ENCODE measurements at regions of chr11 and their contacts with region 1.

Region 1: DNA sequence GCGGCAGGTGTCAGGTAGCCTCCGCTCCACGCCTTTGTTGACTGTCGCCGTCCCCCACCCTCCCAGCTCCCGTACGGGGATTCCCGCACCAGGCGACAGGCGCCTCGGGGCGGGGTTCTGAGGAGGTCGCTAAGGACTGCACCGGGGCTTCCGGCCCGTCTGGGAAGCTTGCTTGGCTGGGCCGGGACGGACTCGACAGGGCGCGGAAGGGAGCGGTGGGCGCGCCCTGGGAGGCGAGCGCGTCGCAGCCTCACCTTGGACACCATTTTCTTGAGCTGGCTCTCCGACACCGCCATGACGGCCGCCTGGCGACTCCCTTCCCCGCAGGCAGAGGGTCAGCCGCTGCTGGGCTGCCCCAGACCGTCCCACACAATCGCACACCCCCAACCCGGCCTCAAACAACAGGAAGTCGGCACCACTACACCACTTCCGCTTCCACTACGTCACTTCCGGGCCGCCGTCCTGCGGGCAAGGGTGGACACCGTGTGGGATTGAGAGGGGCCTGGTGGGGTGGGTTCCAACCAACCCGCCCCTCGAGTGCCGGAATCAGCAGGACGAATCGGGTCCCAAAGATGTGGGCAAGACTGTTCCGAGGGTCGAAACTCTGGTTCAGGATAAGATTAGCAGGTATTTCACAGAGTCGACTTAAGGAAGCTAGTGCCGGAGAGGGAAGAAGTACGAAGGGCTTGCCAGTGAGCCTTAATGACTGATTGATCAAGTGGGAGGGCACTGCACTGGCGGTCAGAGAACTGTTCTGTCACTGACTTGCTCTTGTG is at the start of gene TSG101:
- DNase-seq: peak; percentile 88 to 92
- H3K4me3 ChIP-seq: peak within 1 kb of the TSS; percentile 91
- H3K27ac ChIP-seq: peak within 1 kb of the TSS; percentile 73
- H3K4me1 ChIP-seq: peaks cover 29% of the 10 kb centered on the region
- H3K27me3 ChIP-seq: no peaks in the 10 kb centered on the region
- CTCF ChIP-seq: no peak
- total RNA-seq, gene TSG101: 81.1 and 97.1 TPM in 2 replicates

Region 2: GRCh38 chr11:18115360-18116127 is 411.2 kb before region 1 on chr11:
- CTCF ChIA-PET with region 1: no interaction called
- POLR2A ChIA-PET with region 1: no interaction called
- intact Hi-C with region 1: loop called (anchors 10 kb)
- DNase-seq: peak; percentile 63 to 64
- H3K4me3 ChIP-seq: no peak overlapping the region
- H3K27ac ChIP-seq: no peak overlapping the region
- H3K4me1 ChIP-seq: no peaks in the 10 kb centered on the region
- H3K27me3 ChIP-seq: peaks cover 30% of the 10 kb centered on the region
- CTCF ChIP-seq: peak; percentile 97

Region 3: DNA sequence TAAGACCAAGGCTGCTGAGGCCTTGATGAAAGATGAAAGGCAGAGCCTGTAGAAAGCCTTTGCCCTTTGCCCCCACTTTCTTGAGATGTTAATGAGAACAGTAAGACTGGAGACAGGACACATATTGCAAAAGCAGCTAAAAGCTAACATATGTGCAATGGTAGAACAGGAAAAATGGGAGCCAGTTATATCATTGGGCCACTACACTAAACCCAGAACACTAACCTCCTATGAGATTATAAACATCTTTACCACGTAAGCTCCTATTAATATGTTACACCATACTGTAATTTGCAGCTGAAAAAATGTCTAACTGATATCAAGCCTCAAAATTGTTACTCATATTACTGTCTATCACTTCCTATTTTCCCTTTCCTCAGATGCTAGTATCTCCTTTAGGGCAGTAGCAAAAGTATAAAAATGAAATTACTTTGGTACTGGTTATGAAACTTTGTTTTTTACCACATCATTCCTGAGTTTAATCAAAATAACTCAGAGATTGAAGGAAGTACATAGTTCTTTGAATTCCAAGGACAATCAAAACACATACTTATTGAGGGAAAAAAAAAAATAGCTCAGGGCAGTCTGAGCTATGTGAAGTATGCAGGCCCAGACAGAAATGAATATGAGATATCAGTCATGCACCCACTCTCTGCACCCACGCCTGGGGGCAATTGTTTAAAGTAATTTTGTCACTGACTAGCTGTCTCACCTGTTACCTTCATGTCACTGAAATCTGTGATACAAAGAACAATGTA is 213.9 kb before region 1 on chr11:
- CTCF ChIA-PET with region 1: interaction called, 3 read pairs
- POLR2A ChIA-PET with region 1: interaction called, 24 read pairs
- intact Hi-C with region 1: no loop called
- DNase-seq: peak; percentile 85 to 99
- H3K4me3 ChIP-seq: peak overlapping the region; percentile 9; the same call in 1 of the 2 replicates
- H3K27ac ChIP-seq: peak overlapping the region; percentile 90
- H3K4me1 ChIP-seq: peaks cover 65% of the 10 kb centered on the region
- H3K27me3 ChIP-seq: no peaks in the 10 kb centered on the region
- CTCF ChIP-seq: no peak

Region 4: GRCh38 chr11:18332302-18332701 is 194.4 kb before region 1 on chr11:
- CTCF ChIA-PET with region 1: no interaction called
- POLR2A ChIA-PET with region 1: no interaction called
- intact Hi-C with region 1: no loop called
- DNase-seq: no peak
- H3K4me3 ChIP-seq: no peak overlapping the region
- H3K27ac ChIP-seq: 0 out of 2 replicates have a peak overlapping the region, but pooled peaks have one; percentile 6
- H3K4me1 ChIP-seq: peaks cover 17% of the 10 kb centered on the region
- H3K27me3 ChIP-seq: no peaks in the 10 kb centered on the region
- CTCF ChIP-seq: no peak

Region 5: DNA sequence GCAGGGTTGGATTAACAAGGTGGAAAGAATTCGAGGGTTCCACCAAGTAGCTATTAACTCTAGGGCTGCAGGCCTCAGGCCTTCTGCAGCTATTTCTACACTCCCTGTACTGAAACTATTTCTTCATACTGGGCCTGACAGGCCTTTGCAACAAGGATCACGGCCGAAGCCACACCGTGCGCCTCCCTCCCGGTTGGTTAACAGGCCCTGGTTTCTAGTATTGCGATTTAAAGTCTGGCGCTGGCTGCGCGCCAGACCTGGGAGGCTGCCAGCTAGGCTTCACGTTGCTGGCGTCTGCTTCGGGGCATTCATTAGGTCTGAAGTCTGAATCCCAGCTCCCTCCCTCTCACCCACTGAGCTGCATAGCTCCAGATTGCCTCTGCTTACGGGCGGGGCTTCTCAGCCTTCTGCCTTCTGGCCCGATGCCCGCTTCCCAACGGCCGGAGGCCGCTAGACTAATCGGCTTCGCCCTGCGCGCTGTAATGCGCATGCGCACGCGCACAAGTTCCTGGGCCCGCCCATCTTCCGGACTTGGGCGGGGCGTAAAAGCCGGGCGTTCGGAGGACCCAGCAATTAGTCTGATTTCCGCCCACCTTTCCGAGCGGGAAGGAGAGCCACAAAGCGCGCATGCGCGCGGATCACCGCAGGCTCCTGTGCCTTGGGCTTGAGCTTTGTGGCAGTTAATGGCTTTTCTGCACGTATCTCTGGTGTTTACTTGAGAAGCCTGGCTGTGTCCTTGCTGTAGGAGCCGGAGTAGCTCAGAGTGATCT is 130.8 kb before region 1 on chr11:
- CTCF ChIA-PET with region 1: interaction called, 3 read pairs
- POLR2A ChIA-PET with region 1: interaction called, 5 read pairs
- intact Hi-C with region 1: loop called (anchors 10 kb)
- DNase-seq: peak; percentile 99 to 100
- H3K4me3 ChIP-seq: peak overlapping the region; percentile 79
- H3K27ac ChIP-seq: peak overlapping the region; percentile 84
- H3K4me1 ChIP-seq: peaks cover 33% of the 10 kb centered on the region
- H3K27me3 ChIP-seq: no peaks in the 10 kb centered on the region
- CTCF ChIP-seq: no peak

Region 6: DNA sequence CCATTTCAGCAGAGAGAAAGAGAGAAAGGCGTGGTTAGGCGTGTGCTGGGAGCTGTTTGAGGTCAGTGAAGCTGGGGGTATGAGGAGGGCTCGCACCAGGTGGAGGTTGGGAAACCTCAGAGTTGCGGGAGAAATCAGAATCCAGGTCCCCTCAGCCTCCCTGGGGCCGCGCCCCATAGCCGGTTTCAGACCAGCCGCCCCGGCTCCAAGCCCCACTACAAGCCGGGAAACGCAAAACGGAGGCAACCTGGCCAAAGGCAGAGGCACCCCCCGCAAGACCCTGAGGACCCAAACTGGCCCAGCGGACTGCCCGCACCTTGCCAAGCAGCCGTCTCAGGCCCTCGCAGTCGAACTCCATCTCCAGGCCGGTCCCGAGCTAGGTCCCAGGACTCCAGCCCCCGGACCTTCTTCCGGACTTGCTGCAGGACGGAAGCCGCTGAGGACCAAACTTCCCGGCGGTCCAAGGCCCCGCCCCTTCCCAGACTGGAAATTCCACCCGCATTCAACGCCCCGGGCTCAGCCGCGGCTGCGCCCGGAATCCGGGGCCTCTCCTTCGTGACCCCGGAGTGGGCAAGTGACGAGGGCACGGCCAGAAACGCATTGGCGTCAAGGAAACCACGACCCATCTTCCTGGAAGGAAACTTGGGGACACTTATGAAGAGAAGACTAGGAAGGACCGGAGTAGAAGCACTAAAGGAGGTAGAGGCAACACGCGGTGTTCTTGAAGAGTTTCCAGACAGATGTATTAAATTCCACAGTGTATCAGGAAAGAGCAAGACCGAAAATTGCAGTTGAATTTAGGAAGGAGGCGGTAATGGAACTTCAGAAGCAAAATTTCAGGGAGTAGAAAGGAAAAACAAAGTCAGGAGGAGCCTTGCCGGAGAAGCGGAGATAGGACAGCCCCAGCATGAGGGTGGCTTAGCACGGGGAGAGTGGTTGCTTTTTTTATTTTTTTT is 61.9 kb after region 1 on chr11 and contains the start of gene UEVLD:
- CTCF ChIA-PET with region 1: no interaction called
- POLR2A ChIA-PET with region 1: interaction called, 4 read pairs
- intact Hi-C with region 1: loop called (anchors 2 kb)
- DNase-seq: peak; percentile 82 to 93
- H3K4me3 ChIP-seq: peak within 1 kb of the TSS; percentile 70
- H3K27ac ChIP-seq: peak within 1 kb of the TSS; percentile 36
- H3K4me1 ChIP-seq: peaks cover 24% of the 10 kb centered on the region
- H3K27me3 ChIP-seq: no peaks in the 10 kb centered on the region
- CTCF ChIP-seq: no peak
- total RNA-seq, gene UEVLD: 20.2 and 31.6 TPM in 2 replicates